BJ (cell line): ENCODE measurements at regions of chr2 and their contacts with region 1.

Region 1: DNA sequence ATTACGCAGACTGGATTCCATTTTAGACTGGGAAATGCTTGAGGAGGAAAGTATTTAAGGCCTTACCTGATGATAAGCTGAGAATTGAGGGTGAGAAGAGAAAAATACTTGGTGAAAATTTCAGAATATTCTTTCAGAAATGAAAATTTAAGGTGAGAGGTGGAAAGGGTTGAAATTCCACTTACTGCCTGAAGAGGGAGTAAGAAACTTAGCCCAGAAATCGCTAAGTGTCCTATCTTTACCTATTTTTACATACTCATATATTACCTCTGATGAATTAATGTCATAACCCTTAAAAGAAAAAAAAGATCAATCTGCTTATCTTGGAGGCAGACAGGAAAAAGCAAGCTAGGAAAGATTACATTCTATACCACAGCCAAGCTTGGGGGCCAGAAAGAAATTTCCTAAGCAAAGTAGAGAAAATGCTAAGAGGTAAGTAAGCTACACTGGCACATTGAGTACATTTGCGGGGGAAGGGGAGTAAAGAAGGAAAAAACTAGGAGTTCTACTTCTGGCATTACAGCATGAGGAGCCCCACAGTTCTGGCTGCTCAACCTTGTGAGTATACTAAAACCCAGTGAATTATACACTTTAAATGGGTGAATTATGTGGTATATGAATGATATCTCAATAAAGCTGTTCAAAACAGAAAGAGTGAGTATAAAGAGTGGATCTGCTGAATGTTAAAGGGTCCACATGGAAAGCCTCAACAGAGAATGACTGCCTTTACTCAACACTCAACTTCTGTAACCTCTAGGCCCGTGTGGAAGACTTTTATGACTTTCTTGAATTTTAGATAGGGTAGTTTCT is 33.8 kb downstream of the SMC6 start:
- DNase-seq: no peak
- H3K4me3 ChIP-seq: no peak overlapping the region
- H3K27me3 ChIP-seq: no peaks in the 10 kb centered on the region
- CTCF ChIP-seq: peak; percentile 76

Region 2: GRCh38 chr2:17733599-17733998 is 13.8 kb after region 1 on chr2:
- CTCF ChIA-PET with region 1: interaction called, 13 read pairs
- POLR2A ChIA-PET with region 1: no interaction called
- DNase-seq: no peak
- H3K4me3 ChIP-seq: no peak overlapping the region
- H3K27me3 ChIP-seq: no peaks in the 10 kb centered on the region
- CTCF ChIP-seq: no peak

Region 3: DNA sequence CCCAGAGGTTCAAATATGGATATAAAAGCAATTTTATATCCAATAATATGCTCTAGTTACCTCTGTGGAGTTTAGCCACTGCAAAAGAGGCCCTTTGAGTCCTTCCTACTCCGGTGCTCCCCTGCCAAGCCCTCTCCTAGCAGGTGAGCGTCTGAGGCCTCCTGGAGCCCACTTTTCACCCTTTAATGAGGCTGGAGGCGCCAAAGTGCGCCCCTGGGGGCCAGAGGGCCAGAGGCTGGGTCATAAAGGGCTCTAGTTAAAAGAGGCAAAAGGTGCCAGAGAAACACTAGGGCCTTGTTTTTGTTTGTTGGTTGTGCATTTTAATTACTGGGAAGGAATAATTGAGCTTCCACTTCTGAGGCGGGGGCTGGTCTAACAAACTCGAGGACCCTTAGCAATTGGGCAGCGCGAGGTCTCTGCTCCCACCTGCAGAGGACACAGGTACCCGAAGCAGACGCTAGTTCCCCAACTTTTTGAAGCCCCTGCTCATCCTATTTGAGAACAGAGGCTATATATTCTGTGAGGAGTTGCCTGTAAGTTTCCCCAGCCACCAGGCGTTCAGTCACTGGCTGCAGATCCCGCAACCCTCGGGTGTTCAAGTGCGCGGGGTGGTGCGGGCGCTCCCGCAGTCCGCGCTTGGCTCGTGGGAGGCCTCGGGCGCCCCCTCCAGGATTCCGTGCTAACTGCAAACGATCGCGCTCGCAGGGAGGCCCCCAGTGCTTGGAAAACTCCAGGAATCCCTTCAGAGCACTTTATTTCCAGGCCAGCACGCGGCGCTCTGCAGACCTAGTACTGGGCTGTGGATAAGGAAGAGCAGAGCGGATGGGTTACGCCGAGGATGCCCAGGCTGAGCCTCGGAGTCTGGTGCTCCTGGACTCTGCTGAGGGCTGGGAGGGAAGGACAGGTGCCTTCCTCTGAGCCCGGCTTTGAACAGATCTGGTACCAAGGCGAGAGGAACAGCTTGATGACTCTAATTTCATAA is 110.6 kb after region 1 on chr2:
- CTCF ChIA-PET with region 1: interaction called, 48 read pairs
- POLR2A ChIA-PET with region 1: no interaction called
- DNase-seq: peak; percentile 12
- H3K4me3 ChIP-seq: no peak overlapping the region
- H3K27me3 ChIP-seq: peaks cover 6% of the 10 kb centered on the region
- CTCF ChIP-seq: peak; percentile 95

Region 4: GRCh38 chr2:17912266-17912691 is 192.5 kb after region 1 on chr2:
- CTCF ChIA-PET with region 1: no interaction called
- POLR2A ChIA-PET with region 1: no interaction called
- DNase-seq: no peak
- H3K4me3 ChIP-seq: no peak overlapping the region
- H3K27me3 ChIP-seq: no peaks in the 10 kb centered on the region
- CTCF ChIP-seq: no peak

Region 5: GRCh38 chr2:18387441-18388206 is 667.9 kb after region 1 on chr2:
- CTCF ChIA-PET with region 1: no interaction called
- POLR2A ChIA-PET with region 1: no interaction called
- DNase-seq: no peak
- H3K4me3 ChIP-seq: no peak overlapping the region
- H3K27me3 ChIP-seq: no peaks in the 10 kb centered on the region
- CTCF ChIP-seq: peak; percentile 95